Activated T-helper 2 cell treated with anti-CD3 and anti-CD28 coated beads, Interferon-gamma antibody, Interleukin-2, Interleukin-4, amounts not matched to agents 10 μg/mL and 5 μg/mL and 100 μg/mL, durations not matched to agents 14 hours and 24 hours and 36 hours (primary cell): ENCODE measurements at regions of chr2 and their contacts with region 1.

Region 1: DNA sequence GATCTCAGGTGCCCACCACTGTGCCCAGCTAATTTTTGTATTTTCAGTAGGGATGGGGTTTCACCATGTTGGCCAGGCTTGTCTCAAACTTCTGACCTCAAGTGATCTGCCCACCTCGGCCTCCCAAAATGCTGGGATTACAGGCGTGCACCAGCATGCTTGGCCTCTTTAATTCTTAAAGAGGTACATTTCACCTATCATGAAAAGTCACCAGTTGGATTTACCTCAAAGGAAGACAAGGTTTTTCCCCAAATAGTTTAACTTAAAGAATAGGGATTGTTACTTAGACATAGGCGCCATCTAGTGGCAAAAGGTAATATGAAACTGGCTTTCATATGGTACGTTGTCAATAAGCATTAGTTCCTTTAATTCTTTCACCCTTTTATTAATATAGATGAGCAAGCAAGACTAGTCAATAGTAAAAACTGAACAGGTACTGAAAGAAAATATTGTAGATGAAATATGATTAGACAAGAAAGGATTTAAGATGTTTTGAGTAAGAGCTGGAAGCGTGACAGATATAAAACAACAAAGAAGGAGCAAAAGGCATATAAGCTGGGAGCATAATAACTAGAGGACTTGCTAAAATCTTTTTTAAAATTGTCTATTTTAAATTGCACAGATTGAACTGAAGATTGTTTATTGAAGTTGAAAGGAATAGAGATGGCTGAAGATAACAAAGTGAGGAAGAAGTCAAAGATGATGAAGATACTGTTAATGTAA is 35.0 kb upstream of the PSMD14 start:
- DNase-seq: no peak
- H3K4me3 Mint-ChIP-seq: no peak overlapping the region
- H3K27ac Mint-ChIP-seq: no peak overlapping the region
- H3K4me1 Mint-ChIP-seq: peaks cover 8% of the 10 kb centered on the region
- H3K27me3 Mint-ChIP-seq: peaks cover 20% of the 10 kb centered on the region

Region 2: GRCh38 chr2:161223139-161223732 is 50.0 kb before region 1 on chr2:
- intact Hi-C with region 1: loop called (anchors 1 kb)
- DNase-seq: no peak
- H3K4me3 Mint-ChIP-seq: no peak overlapping the region
- H3K27ac Mint-ChIP-seq: no peak overlapping the region
- H3K4me1 Mint-ChIP-seq: peaks cover 1% of the 10 kb centered on the region
- H3K27me3 Mint-ChIP-seq: no peaks in the 10 kb centered on the region

Region 3: GRCh38 chr2:161352719-161353118 is 79.5 kb after region 1 on chr2:
- intact Hi-C with region 1: no loop called
- DNase-seq: no peak
- H3K4me3 Mint-ChIP-seq: no peak overlapping the region
- H3K27ac Mint-ChIP-seq: no peak overlapping the region
- H3K4me1 Mint-ChIP-seq: peaks cover 19% of the 10 kb centered on the region
- H3K27me3 Mint-ChIP-seq: no peaks in the 10 kb centered on the region